Heart right ventricle (tissue), 16 donors: ENCODE measurements at regions of chr6 and their contacts with region 1.

Region 1: DNA sequence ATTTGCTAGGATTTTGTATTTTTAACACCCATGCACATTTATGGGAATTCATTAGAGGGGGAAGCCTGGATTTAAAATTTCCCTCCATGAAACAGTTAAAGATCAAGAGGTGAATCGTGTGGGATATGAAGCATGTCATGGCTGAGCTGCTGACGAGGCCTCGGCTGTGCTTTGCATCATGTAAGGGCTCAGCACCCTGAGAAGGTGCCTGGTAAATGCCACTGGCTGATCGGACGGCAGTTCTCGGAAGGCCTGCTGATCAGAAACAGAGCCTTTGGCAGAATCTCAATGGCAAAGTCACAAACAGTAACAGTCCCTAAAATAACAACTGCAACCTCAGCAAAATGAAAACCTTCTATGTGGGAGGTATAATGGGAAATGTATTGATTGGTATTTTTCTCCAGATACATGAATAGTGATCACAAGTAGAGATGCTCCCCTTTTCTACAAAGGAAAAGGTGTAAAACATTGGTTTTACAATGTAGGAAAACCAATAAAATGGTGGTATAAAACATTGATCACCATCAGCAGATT is 53.0 kb upstream of the FUCA2 start:
- DNase-seq: peak; percentile 47 to 70
- ATAC-seq: peak; percentile 80 to 99 (median 91)
- H3K4me3 ChIP-seq: no peak overlapping the region
- H3K27ac ChIP-seq: peak overlapping the region in 9 of 10 donors; percentile 28 to 75 (median 65)
- H3K4me1 ChIP-seq: peaks cover 0 to 10% (median 0%) of the 10 kb centered on the region in 9 donors
- H3K27me3 ChIP-seq: no peaks in the 10 kb centered on the region
- CTCF ChIP-seq: no peak

Region 2: DNA sequence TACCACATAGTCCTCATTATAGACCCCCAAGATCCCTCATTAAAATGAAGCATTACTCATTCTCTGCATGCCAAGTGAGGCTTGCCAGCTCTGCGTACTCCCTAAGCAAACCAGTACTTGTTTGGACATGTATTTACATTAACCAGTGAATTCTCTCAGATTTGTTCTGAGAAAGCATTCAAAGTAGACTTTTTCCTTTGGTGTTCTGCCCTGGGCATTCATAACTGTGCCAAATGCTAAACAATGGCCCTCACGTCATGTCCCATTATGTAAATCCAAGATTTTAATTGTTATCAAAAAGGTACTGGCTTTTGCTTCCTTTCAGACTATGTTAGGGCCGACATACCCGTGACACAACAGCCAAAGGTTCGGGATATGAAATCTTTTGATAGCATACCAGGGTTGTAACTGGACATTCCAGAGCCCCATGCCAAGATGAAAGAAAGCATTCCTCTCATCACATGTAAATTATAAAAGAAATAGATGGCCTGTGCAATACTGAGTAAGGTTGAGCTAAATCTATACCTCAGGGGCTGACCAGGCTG is 278.2 kb before region 1 on chr6:
- intact Hi-C with region 1: no loop called
- DNase-seq: no peak
- ATAC-seq: peak in 5 of 8 donors; percentile 35 to 77 (median 63)
- H3K4me3 ChIP-seq: no peak overlapping the region
- H3K27ac ChIP-seq: peak overlapping the region in 1 of 10 donors; percentile 39
- H3K4me1 ChIP-seq: peaks cover 0 to 15% (median 0%) of the 10 kb centered on the region in 9 donors
- H3K27me3 ChIP-seq: no peaks in the 10 kb centered on the region
- CTCF ChIP-seq: no peak

Region 3: GRCh38 chr6:143510991-143511891 is 53.3 kb before region 1 on chr6 and contains the start of gene FUCA2:
- intact Hi-C with region 1: loop called in 1 of 10 experiments (anchors 5 kb)
- DNase-seq: peak; percentile 94 to 95
- ATAC-seq: peak; percentile 90 to 95 (median 92)
- H3K4me3 ChIP-seq: peak within 1 kb of the TSS; percentile 53 to 83 (median 74)
- H3K27ac ChIP-seq: peak within 1 kb of the TSS; percentile 74 to 96 (median 90)
- H3K4me1 ChIP-seq: peaks cover 3 to 56% (median 29%) of the 10 kb centered on the region in 9 donors
- H3K27me3 ChIP-seq: no peaks in the 10 kb centered on the region
- CTCF ChIP-seq: peak in 2 of 9 donors; percentile 19 to 25
- total RNA-seq, gene FUCA2: 32.8 to 63.4 (median 40.1) TPM